ENCODE measurements at regions of chr4 and their contacts with region 1.

Region 1: DNA sequence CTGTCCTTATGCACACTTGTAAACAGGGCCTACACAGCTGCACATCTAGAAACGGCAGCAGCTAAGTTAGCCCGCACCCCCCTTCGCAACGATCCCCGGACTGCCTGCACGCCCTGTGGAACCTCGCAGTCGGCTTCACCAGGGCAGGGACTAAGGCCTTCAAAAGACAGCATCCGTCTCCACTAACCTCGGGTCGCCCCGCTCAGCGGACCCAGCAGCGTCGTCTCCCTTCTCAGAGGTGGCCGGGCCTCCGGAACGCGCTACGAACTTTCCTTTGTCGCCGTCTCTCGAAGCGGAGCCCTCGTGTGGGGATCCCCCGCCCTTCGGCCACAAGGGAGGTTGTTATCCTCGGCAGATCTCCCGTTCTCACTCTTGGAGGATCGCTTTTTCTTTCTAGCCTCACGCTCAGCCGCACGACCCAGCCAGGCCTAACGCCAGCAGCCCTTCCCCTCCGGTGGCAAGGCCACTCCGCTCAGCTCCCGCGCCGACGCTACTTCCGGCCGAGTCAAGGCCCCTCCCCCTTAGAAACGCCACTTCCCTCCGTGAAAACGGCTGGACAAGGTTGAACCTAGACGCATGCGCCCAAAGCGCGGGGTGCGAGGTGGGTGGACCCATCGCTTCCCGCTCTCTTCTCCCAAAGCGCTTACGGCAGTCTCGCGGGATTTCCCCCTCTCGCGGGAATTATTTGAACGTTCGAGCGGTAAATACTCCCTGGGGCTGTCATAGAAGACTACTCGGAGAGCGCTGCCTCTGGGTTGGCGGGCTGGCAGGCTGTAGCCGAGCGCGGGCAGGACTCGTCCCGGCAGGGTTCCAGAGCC is at the starts of genes DCAF16 and NCAPG:
- DNase-seq: peak; percentile 98
- ATAC-seq: peak; percentile 93
- H3K4me3 Mint-ChIP-seq: peak within 1 kb of the TSS; percentile 96
- H3K27ac Mint-ChIP-seq: peak within 1 kb of the TSS; percentile 96
- H3K4me1 Mint-ChIP-seq: peaks cover 57% of the 10 kb centered on the region
- H3K27me3 Mint-ChIP-seq: no peaks in the 10 kb centered on the region
- CTCF ChIP-seq: no peak
- total RNA-seq, gene DCAF16: 42.9 and 57.2 TPM in 2 replicates
- total RNA-seq, gene NCAPG: 1.1 and 1.5 TPM in 2 replicates

Region 2: DNA sequence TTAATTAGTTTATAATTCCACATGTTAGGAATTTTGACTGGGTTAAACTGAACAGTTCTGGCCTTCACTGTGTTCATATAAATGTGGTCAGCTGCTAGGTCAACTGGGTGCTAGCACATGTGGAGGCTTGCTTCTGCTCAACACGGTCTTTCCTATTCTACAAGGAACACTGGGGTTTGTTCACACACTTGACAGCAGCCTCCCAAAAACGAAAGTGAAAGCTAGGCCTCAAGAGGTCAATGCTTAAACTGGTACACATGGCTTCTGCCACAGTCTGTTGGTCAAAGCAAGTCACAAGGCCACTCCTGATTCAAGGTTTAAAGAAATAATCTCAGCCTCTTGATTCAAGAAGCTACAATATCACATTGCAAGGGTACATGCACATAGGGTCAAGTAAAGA is 425.1 kb before region 1 on chr4:
- CTCF ChIA-PET with region 1: no interaction called
- POLR2A ChIA-PET with region 1: no interaction called
- intact Hi-C with region 1: no loop called
- DNase-seq: no peak
- ATAC-seq: no peak
- H3K4me3 Mint-ChIP-seq: no peak overlapping the region
- H3K27ac Mint-ChIP-seq: no peak overlapping the region
- H3K4me1 Mint-ChIP-seq: peaks cover 6% of the 10 kb centered on the region
- H3K27me3 Mint-ChIP-seq: peaks cover 1% of the 10 kb centered on the region
- CTCF ChIP-seq: no peak

Region 3: GRCh38 chr4:17511950-17512795 is 298.3 kb before region 1 on chr4 and contains the start of gene QDPR:
- CTCF ChIA-PET with region 1: no interaction called
- POLR2A ChIA-PET with region 1: no interaction called
- intact Hi-C with region 1: loop called (anchors 1 kb)
- DNase-seq: peak; percentile 60
- ATAC-seq: peak; percentile 90
- H3K4me3 Mint-ChIP-seq: peak within 1 kb of the TSS; percentile 95
- H3K27ac Mint-ChIP-seq: peak within 1 kb of the TSS; percentile 62
- H3K4me1 Mint-ChIP-seq: peaks cover 19% of the 10 kb centered on the region
- H3K27me3 Mint-ChIP-seq: peaks cover 9% of the 10 kb centered on the region
- CTCF ChIP-seq: no peak
- total RNA-seq, gene QDPR: 7.2 and 8.9 TPM in 2 replicates

Region 4: GRCh38 chr4:17544205-17544604 is 266.3 kb before region 1 on chr4:
- CTCF ChIA-PET with region 1: interaction called, 40 read pairs
- POLR2A ChIA-PET with region 1: interaction called, 5 read pairs
- intact Hi-C with region 1: loop called (anchors 1 kb)
- DNase-seq: no peak
- ATAC-seq: no peak
- H3K4me3 Mint-ChIP-seq: no peak overlapping the region
- H3K27ac Mint-ChIP-seq: no peak overlapping the region
- H3K4me1 Mint-ChIP-seq: peaks cover 3% of the 10 kb centered on the region
- H3K27me3 Mint-ChIP-seq: peaks cover 9% of the 10 kb centered on the region
- CTCF ChIP-seq: no peak

Region 5: GRCh38 chr4:17736484-17736883 is 74.0 kb before region 1 on chr4:
- CTCF ChIA-PET with region 1: no interaction called
- POLR2A ChIA-PET with region 1: no interaction called
- intact Hi-C with region 1: no loop called
- DNase-seq: no peak
- ATAC-seq: no peak
- H3K4me3 Mint-ChIP-seq: no peak overlapping the region
- H3K27ac Mint-ChIP-seq: no peak overlapping the region
- H3K4me1 Mint-ChIP-seq: no peaks in the 10 kb centered on the region
- H3K27me3 Mint-ChIP-seq: peaks cover 3% of the 10 kb centered on the region
- CTCF ChIP-seq: no peak

Region 6: GRCh38 chr4:18593445-18594002 is 783.1 kb after region 1 on chr4:
- CTCF ChIA-PET with region 1: interaction called, 21 read pairs
- POLR2A ChIA-PET with region 1: no interaction called
- intact Hi-C with region 1: loop called (anchors 2 kb)
- DNase-seq: no peak
- ATAC-seq: no peak
- H3K4me3 Mint-ChIP-seq: no peak overlapping the region
- H3K27ac Mint-ChIP-seq: no peak overlapping the region
- H3K4me1 Mint-ChIP-seq: peaks cover 3% of the 10 kb centered on the region
- H3K27me3 Mint-ChIP-seq: peaks cover 10% of the 10 kb centered on the region
- CTCF ChIP-seq: peak; percentile 51